ENCODE measurements at regions of chr11 and their contacts with region 1.

Region 1: GRCh38 chr11:59615637-59616395 is at the start of gene OSBP:
- DNase-seq: peak; percentile 93 to 100 (median 96)
- ATAC-seq: peak; percentile 74
- H3K4me3 ChIP-seq: peak within 1 kb of the TSS; percentile 68
- H3K4me3 Mint-ChIP-seq: peak within 1 kb of the TSS; percentile 96
- H3K27ac ChIP-seq: peak within 1 kb of the TSS; percentile 90 to 99
- H3K27ac Mint-ChIP-seq: peak within 1 kb of the TSS; percentile 77
- H3K4me1 ChIP-seq: peaks cover 22% of the 10 kb centered on the region
- H3K4me1 Mint-ChIP-seq: peaks cover 48% of the 10 kb centered on the region
- H3K27me3 ChIP-seq: no peaks in the 10 kb centered on the region
- H3K27me3 Mint-ChIP-seq: no peaks in the 10 kb centered on the region
- CTCF ChIP-seq: no peak
- total RNA-seq, gene OSBP: 54.9 to 58.2 TPM

Region 2: DNA sequence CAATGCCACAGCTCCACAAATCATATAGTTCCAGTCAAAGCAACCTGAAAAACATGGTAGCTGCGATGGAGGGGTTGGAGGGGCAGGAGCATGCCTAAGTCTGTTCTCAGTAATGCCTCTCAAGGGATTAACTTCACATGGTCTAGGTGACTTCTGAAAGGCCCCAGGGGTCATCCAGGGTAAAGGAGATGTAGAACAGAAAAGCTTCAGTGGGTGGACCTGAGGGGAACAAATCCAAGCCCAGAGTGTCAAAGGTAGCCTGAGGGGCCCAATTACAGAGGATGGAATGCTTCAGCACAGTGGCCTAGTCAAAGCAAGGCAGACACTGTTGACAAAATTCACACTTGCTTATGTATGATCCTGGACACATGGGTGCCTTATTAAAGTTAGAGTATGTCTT is 81.1 kb before region 1 on chr11:
- CTCF ChIA-PET with region 1: interaction called, 9 read pairs
- POLR2A ChIA-PET with region 1: interaction called, 23 read pairs
- intact Hi-C with region 1: loop called in 1 of 2 experiments (anchors 5 kb)
- DNase-seq: no peak
- ATAC-seq: no peak
- H3K4me3 ChIP-seq: no peak overlapping the region
- H3K4me3 Mint-ChIP-seq: no peak overlapping the region
- H3K27ac ChIP-seq: no peak overlapping the region
- H3K27ac Mint-ChIP-seq: no peak overlapping the region
- H3K4me1 ChIP-seq: peaks cover 8% of the 10 kb centered on the region
- H3K4me1 Mint-ChIP-seq: peaks cover 13% of the 10 kb centered on the region
- H3K27me3 ChIP-seq: no peaks in the 10 kb centered on the region
- H3K27me3 Mint-ChIP-seq: no peaks in the 10 kb centered on the region
- CTCF ChIP-seq: no peak

Region 3: DNA sequence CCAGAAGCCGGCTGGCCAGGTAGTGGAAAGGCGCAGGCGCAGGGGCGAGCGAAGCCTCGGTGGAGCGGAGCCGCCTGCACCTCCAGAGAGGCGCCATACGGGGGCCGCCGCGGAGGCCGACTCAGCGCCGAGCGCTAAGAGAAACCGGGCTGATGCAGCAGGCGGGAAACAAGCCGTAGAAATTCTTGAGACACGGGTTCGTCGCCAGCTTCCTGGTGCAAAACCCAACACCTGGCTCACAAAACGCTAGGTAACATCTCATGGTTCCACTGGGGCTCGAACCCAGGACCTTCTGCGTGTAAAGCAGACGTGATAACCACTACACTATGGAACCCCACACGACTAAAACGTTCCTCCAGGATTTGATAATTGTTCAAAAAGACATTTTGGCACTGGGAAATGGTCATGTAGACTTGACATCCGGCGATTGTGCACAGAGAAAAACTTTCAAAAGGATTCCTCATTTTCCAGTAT is 65.4 kb before region 1 on chr11:
- CTCF ChIA-PET with region 1: interaction called, 9 read pairs
- POLR2A ChIA-PET with region 1: interaction called, 32 read pairs
- intact Hi-C with region 1: loop called (anchors 1 to 5 kb)
- DNase-seq: peak; percentile 71 to 94 (median 82)
- ATAC-seq: peak; percentile 81
- H3K4me3 ChIP-seq: peak overlapping the region; percentile 57
- H3K4me3 Mint-ChIP-seq: peak overlapping the region; percentile 94
- H3K27ac ChIP-seq: peak overlapping the region; percentile 35 to 37
- H3K27ac Mint-ChIP-seq: peak overlapping the region; percentile 99
- H3K4me1 ChIP-seq: peaks cover 15% of the 10 kb centered on the region
- H3K4me1 Mint-ChIP-seq: peaks cover 33% of the 10 kb centered on the region
- H3K27me3 ChIP-seq: no peaks in the 10 kb centered on the region
- H3K27me3 Mint-ChIP-seq: peaks cover 11% of the 10 kb centered on the region
- CTCF ChIP-seq: peak; percentile 60

Region 4: GRCh38 chr11:59560702-59561469 is 54.9 kb before region 1 on chr11:
- CTCF ChIA-PET with region 1: interaction called, 4 read pairs
- POLR2A ChIA-PET with region 1: interaction called, 79 read pairs
- intact Hi-C with region 1: loop called in 1 of 2 experiments (anchors 1 kb)
- DNase-seq: peak; percentile 70 to 92 (median 80)
- ATAC-seq: peak; percentile 71
- H3K4me3 ChIP-seq: peak overlapping the region; percentile 92
- H3K4me3 Mint-ChIP-seq: peak overlapping the region; percentile 97
- H3K27ac ChIP-seq: peak overlapping the region; percentile 71 to 73
- H3K27ac Mint-ChIP-seq: peak overlapping the region; percentile 92
- H3K4me1 ChIP-seq: peaks cover 45% of the 10 kb centered on the region
- H3K4me1 Mint-ChIP-seq: peaks cover 50% of the 10 kb centered on the region
- H3K27me3 ChIP-seq: no peaks in the 10 kb centered on the region
- H3K27me3 Mint-ChIP-seq: peaks cover 10% of the 10 kb centered on the region
- CTCF ChIP-seq: no peak

Region 5: DNA sequence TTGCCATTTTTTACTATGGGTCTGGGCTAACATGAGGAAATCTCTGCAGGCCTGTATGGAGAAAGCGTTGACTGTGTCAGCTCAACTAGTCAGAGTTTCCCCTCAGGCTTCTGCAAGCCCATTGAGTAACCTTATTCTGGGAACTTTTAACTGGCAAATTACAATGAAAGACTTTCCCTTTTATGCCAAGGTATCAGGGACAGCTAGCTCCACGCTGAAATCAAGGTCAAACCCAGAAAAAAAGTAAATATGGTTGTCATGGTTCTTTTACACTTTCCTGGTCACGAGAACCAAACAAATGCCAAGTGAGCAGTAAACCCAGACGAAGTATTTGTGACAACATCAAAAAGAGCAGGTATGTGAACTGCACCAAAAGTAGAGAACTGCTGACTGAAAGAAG is 14.0 kb before region 1 on chr11:
- CTCF ChIA-PET with region 1: no interaction called
- POLR2A ChIA-PET with region 1: interaction called, 11 read pairs
- intact Hi-C with region 1: no loop called
- DNase-seq: no peak
- ATAC-seq: no peak
- H3K4me3 ChIP-seq: no peak overlapping the region
- H3K4me3 Mint-ChIP-seq: no peak overlapping the region
- H3K27ac ChIP-seq: no peak overlapping the region
- H3K27ac Mint-ChIP-seq: no peak overlapping the region
- H3K4me1 ChIP-seq: no peaks in the 10 kb centered on the region
- H3K4me1 Mint-ChIP-seq: peaks cover 20% of the 10 kb centered on the region
- H3K27me3 ChIP-seq: no peaks in the 10 kb centered on the region
- H3K27me3 Mint-ChIP-seq: no peaks in the 10 kb centered on the region
- CTCF ChIP-seq: no peak

Region 6: GRCh38 chr11:59753650-59754493 is 138.1 kb after region 1 on chr11:
- CTCF ChIA-PET with region 1: no interaction called
- POLR2A ChIA-PET with region 1: interaction called, 7 read pairs
- intact Hi-C with region 1: loop called in 1 of 2 experiments (anchors 5 kb)
- DNase-seq: peak; percentile 67 to 89 (median 78)
- ATAC-seq: peak; percentile 63
- H3K4me3 ChIP-seq: peak overlapping the region; percentile 89
- H3K4me3 Mint-ChIP-seq: peak overlapping the region; percentile 93
- H3K27ac ChIP-seq: no peak overlapping the region
- H3K27ac Mint-ChIP-seq: peak overlapping the region; percentile 40
- H3K4me1 ChIP-seq: peaks cover 28% of the 10 kb centered on the region
- H3K4me1 Mint-ChIP-seq: peaks cover 26% of the 10 kb centered on the region
- H3K27me3 ChIP-seq: peaks cover 6 to 16% of the 10 kb centered on the region in 2 experiments
- H3K27me3 Mint-ChIP-seq: peaks cover 18% of the 10 kb centered on the region
- CTCF ChIP-seq: peak; percentile 96

Region 7: DNA sequence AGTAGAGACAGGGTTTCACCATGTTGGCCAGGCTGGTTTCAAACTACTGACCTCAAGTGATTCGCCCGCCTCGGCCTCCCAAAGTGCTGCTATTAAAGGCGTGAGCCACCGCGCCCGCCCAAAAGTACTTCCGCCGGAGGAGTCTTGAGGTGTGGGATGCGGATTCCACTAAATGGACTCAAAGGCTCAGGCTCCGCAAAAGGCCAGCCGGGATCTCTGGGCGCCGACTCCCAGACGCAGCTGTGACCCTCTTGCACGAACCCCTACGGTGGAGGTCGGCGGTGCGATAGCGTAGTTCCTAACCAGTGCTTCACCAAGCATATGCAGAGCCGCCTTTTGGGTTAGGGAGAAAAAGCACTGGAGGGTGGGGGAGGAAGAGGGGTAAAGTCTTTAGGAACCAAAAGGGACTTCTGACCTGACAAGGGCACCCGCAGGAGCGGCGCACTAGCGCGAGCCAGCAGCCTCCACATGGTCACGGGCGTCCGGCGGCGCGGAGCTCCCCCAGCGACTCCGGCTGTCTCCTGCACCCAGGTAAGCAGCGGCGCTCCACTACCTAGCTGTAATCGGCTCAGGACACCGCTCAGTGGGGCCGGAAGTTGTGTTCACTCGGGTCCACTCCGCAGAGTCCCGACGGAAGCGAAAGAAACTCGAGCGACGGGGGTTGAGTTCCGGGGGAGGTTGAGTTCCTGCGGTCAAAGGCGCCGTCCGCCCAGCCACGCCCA is 194.5 kb after region 1 on chr11 and contains the start of gene MRPL16:
- CTCF ChIA-PET with region 1: no interaction called
- POLR2A ChIA-PET with region 1: interaction called, 14 read pairs
- intact Hi-C with region 1: loop called in 1 of 2 experiments (anchors 5 kb)
- DNase-seq: peak; percentile 84 to 95 (median 88)
- ATAC-seq: peak; percentile 99
- H3K4me3 ChIP-seq: peak within 1 kb of the TSS; percentile 93
- H3K4me3 Mint-ChIP-seq: peak within 1 kb of the TSS; percentile 95
- H3K27ac ChIP-seq: peak within 1 kb of the TSS; percentile 53 to 65
- H3K27ac Mint-ChIP-seq: peak within 1 kb of the TSS; percentile 93
- H3K4me1 ChIP-seq: peaks cover 25% of the 10 kb centered on the region
- H3K4me1 Mint-ChIP-seq: peaks cover 33% of the 10 kb centered on the region
- H3K27me3 ChIP-seq: no peaks in the 10 kb centered on the region
- H3K27me3 Mint-ChIP-seq: peaks cover 3% of the 10 kb centered on the region
- CTCF ChIP-seq: peak; percentile 12
- total RNA-seq, gene MRPL16: 22.8 to 24.6 TPM

Measured in CD4-positive, alpha-beta T cell (primary cell).